H1 (cell line): ENCODE measurements at regions of chr3 and their contacts with region 1.

Region 1: DNA sequence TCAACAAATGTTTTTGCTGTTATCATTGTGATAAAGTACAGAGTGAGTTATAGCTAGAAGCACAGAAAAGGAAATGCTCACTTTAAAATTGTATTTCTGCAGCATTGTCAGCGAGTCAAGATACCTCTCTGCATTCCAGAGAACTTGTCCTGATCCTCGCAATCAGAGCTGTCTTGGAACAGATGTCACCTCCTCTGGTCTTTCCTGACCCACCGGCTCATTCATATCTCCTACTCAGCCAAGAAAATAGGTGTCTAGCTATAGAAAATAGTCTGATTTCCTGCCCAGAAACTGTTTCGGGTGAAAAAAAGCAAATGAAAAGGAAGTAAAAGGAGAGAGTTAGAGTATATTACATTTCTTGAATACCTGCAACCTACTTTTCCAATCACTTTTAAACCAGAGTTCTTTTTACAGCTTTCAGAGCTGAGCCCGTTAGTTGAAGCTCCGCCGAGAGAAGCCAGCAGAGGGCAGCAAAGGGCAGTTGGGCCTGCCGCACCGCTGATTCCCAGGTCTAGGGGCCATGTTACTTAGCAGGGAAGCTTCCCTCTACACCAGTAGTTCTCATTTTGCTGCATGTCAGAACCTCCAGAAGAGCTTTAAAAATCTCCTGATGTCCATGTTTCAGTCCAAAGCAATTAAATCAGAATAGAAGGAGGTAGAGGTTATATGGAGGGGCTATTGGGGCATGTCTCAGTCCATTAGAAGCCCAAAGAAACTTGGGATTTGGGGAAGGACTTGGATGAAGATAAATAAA is 185.7 kb upstream of the THRB start:
- DNase-seq: peak in 1 of 2 experiments; percentile 96
- H3K4me3 ChIP-seq: no peak overlapping the region
- H3K27ac ChIP-seq: no peak overlapping the region
- H3K4me1 ChIP-seq: peaks cover 0 to 7% (median 3%) of the 10 kb centered on the region in 4 experiments; a peak in 4 of 7 replicates
- H3K27me3 ChIP-seq: no peaks in the 10 kb centered on the region
- CTCF ChIP-seq: peak; percentile 85 to 87 (median 87)
- EP300 ChIP-seq: no peak
- POLR2A ChIP-seq: no peak
- RAD21 ChIP-seq: peak; percentile 80 to 87

Region 2: GRCh38 chr3:24264748-24265158 is 415.6 kb before region 1 on chr3:
- CTCF ChIA-PET with region 1: interaction called, 49 read pairs
- POLR2A ChIA-PET with region 1: no interaction called
- DNase-seq: no peak
- H3K4me3 ChIP-seq: no peak overlapping the region
- H3K27ac ChIP-seq: no peak overlapping the region
- H3K4me1 ChIP-seq: no peaks in the 10 kb centered on the region
- H3K27me3 ChIP-seq: no peaks in the 10 kb centered on the region
- CTCF ChIP-seq: peak; percentile 30 to 71 (median 60)
- EP300 ChIP-seq: no peak
- POLR2A ChIP-seq: no peak
- RAD21 ChIP-seq: peak; percentile 81 to 84

Region 3: DNA sequence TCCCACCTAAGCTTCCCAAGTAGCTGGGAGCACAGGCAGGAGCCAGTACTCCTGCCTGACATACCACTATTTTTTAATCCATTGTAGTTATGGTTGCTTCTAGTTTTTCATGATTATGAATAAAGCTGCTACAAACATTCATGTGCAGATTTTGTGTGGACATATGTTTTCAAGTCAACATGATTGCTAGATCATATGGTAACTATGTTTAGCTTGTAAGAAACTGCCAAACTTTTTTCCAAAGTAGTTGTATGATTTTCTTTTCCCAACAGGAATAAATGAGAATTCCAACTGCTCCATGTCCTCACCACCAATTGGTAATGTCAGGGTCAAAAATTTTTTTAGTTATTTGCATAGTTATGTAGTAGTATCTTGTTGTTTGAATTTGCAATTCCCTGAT is 48.9 kb before region 1 on chr3:
- CTCF ChIA-PET with region 1: no interaction called
- POLR2A ChIA-PET with region 1: no interaction called
- DNase-seq: no peak
- H3K4me3 ChIP-seq: no peak overlapping the region
- H3K27ac ChIP-seq: no peak overlapping the region
- H3K4me1 ChIP-seq: no peaks in the 10 kb centered on the region
- H3K27me3 ChIP-seq: no peaks in the 10 kb centered on the region
- CTCF ChIP-seq: no peak
- EP300 ChIP-seq: no peak
- POLR2A ChIP-seq: no peak
- RAD21 ChIP-seq: no peak

Region 4: DNA sequence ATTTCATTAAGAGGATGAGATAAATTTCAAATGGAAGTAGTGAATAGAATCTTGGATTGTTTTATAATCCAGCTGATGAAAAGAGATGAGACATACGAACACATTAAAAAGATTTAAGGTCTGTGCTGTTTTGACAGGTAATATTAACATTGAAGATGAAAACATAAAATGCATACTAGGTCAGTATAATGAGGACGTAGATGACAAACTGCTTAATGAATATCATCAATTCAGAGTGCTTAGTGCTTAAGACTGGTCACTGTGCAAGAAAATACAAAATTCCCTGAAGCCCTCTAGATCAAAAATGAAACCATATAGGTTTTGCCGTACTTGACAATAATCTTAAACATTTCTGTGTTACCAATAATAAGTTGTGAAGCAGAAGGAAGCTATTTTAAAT is 12.4 kb before region 1 on chr3:
- CTCF ChIA-PET with region 1: interaction called, 31 read pairs
- POLR2A ChIA-PET with region 1: no interaction called
- DNase-seq: no peak
- H3K4me3 ChIP-seq: no peak overlapping the region
- H3K27ac ChIP-seq: no peak overlapping the region
- H3K4me1 ChIP-seq: no peaks in the 10 kb centered on the region
- H3K27me3 ChIP-seq: no peaks in the 10 kb centered on the region
- CTCF ChIP-seq: no peak
- EP300 ChIP-seq: no peak
- POLR2A ChIP-seq: no peak
- RAD21 ChIP-seq: no peak